A673 (cell line): ENCODE measurements at regions of chr1 and their contacts with region 1.

Region 1: DNA sequence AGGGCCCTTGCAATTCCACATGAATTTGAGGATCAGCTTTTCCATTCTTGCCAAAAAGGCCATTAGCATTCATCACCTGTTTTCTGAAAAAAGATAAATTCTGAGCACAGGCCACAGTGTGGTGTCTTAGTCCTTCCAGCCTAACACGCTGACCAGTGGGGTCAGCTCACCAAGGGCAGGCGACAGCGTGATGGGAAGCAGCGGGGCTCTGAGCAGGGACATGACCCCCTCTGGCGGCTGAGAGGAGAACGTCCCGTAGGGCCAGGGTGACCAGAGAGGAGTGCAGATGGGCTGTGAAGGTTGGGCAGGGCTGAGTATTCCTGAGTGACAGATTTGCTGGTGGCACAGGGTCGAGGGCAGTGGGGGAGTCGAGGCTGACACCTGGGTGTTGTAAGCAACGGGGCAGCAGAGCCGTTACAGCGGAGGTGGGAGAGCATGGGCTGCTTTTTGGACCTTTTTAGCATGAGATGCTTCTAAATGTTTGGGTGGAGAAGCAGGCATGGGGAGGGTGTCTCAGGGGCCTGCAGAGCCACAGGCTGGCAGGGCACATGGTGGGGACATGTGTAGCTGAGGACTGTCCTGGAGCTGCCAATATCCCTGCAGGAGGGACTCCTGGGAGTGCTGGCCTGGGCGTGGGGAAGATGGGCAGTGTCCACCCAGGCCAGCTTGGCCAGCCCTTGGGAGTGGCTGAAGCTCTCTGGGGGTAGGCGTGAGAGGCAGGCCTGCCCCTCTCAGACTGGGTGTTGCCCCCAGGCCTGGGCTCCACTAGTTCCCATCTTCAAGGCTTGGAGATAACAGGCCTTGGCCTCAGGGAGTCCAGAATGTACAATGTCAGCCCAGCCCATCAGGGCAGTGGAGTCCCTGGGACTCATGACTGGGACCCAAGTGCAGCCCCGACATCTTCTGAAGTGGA is 8.6 kb upstream of the CALML6 start:
- DNase-seq: peak; percentile 66
- H3K4me3 ChIP-seq: no peak overlapping the region
- H3K27ac ChIP-seq: peak overlapping the region; percentile 52
- H3K4me1 ChIP-seq: peaks cover 5% of the 10 kb centered on the region
- H3K27me3 ChIP-seq: no peaks in the 10 kb centered on the region
- CTCF ChIP-seq: peak; percentile 94

Region 2: DNA sequence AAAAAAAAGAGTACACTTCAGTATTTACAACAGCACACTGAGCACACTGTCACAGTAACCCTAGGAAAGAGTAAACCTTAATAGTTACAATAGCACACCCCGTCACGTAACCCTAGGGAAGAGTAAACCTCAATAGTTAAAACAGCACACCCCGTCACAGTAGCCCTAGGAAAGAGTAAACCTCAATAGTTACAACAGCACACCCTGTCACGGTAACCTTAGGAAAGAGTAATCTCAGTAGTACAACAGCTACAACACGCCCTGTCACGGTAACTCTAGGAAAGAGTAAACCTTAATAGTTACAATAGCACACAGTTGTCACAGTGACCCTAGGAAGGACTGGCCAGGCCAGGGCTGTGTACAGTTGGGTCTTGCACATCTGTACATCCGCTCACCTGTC is 185.2 kb before region 1 on chr1:
- CTCF ChIA-PET with region 1: no interaction called
- POLR2A ChIA-PET with region 1: interaction called, 3 read pairs
- intact Hi-C with region 1: loop called (anchors 5 kb)
- DNase-seq: no peak
- H3K4me3 ChIP-seq: no peak overlapping the region
- H3K27ac ChIP-seq: no peak overlapping the region
- H3K4me1 ChIP-seq: no peaks in the 10 kb centered on the region
- H3K27me3 ChIP-seq: no peaks in the 10 kb centered on the region
- CTCF ChIP-seq: no peak

Region 3: DNA sequence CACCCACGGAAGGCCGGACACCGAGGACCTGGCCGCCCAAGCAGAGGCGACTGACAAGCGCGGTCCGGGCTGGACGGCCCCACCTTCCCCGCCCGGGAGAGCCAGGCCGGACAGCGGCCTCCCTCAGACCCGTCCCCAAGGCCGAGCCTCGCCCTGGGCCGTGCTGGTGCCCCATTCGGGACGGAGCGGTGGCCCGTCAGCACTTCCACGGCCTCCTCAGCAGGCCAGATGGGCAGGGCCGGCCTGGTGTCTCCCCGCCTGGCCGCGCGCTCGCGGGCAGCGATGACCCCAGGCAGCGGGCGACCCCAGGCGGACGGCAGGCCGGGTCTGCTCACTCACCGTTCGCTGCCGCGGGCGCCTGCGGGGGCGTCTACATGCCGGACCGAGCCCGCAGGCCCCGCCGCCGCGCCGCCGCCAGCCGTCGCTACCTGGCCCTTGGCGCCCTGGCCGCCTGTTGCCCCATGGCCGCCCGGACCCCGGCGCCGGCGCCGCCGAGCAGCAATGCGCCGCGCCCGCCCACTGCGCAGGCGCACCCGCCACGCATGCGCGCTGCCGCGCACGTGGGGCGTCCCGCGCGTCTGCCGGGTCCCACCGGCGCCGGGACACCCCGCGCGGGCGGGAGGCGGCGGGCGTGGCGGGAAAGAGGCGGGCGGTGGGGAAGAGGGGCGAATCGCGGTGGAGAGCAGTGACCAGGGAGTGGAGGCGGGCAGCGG is 128.3 kb before region 1 on chr1 and contains the start of gene NADK:
- CTCF ChIA-PET with region 1: interaction called, 7 read pairs
- POLR2A ChIA-PET with region 1: interaction called, 3 read pairs
- intact Hi-C with region 1: loop called (anchors 5 kb)
- DNase-seq: peak; percentile 78
- H3K4me3 ChIP-seq: peak within 1 kb of the TSS; percentile 89
- H3K27ac ChIP-seq: peak within 1 kb of the TSS; percentile 87
- H3K4me1 ChIP-seq: peaks cover 30% of the 10 kb centered on the region
- H3K27me3 ChIP-seq: no peaks in the 10 kb centered on the region
- CTCF ChIP-seq: no peak
- total RNA-seq, gene NADK: 81.3 and 86.2 TPM in 2 replicates

Region 4: DNA sequence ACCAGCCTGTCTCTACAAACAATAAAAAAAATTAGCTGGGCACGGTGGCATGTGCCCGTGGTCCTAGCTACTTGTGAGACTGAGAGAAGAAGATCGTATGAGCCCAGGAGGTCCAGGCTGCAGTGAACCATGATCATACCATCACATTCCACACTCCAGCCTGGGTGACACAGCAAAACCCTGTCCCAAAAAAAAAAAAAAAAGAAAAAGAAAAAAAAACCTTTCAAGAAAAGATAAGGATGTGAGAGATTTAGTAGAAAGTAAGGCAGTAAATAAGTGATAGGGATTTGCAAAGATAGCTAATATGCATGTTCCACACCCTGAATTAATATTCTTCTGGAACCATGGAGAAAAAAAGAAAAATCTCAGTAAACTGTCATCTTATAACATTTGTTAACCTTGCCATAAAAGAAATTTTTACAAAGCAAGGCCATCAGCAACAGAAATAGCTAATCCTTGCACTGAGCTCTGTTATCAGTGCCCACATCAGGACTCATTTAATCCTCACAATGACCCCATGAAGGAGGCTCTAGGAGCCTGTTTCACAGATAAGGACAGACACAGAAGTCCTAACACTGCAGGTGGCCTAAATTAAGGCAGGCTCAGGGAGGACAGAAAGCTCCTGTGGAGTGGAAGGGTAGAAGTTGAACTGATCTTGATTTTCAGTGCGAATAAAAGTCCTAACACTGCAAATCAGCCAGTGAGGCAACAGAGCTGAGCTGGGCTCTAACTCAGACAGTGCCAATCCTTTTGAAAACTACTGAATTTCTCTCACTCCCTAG is 23.2 kb before region 1 on chr1:
- CTCF ChIA-PET with region 1: interaction called, 5 read pairs
- POLR2A ChIA-PET with region 1: interaction called, 10 read pairs
- intact Hi-C with region 1: no loop called
- DNase-seq: peak; percentile 57
- H3K4me3 ChIP-seq: no peak overlapping the region
- H3K27ac ChIP-seq: peak overlapping the region; percentile 45
- H3K4me1 ChIP-seq: peaks cover 15% of the 10 kb centered on the region
- H3K27me3 ChIP-seq: no peaks in the 10 kb centered on the region
- CTCF ChIP-seq: no peak